ENCODE measurements at regions of chr2 and their contacts with region 1.

Region 1: DNA sequence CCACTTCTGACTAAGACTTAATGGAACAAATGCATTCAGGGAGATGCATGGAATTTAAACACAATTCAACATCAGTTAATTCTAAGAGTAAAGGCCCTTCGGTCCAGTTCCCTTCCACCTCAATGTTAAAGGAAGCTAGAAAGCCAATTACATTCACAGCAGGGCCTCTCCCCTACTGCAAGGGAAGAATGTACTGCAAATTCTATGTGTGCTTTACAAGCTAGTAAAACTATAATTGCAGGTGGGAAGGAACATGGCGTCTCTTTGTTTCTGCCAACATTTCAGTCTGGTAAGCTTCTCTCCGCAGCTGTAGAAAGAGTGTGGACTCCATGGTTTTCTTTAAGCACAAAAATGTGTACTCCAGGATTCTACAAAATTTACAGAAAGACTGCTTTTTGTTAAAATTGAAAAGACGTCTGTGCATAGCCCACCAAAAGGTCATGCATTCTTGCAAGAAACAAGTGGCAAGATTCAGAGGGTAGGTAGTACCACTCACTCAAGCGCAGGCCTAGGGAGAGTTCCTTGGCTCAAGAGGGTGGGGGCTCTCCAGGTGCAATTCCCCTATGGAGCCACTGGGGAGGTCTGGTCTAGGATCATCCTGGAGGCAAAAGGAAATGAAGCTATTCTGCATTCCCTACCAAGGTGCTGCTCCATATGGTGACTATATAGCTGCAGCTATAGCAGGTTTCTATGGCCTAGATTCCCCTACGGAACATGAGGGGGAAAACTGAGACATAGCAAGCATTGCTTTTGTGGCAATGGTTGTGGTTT is 127.0 kb upstream of the FZD5 start:
- DNase-seq: peak; percentile 46
- ATAC-seq: peak; percentile 81
- H3K4me3 ChIP-seq: no peak overlapping the region; a peak in 1 of 6 replicates
- H3K27ac ChIP-seq: peak overlapping the region; percentile 88
- H3K4me1 ChIP-seq: peaks cover 81% of the 10 kb centered on the region
- H3K27me3 ChIP-seq: no peaks in the 10 kb centered on the region
- CTCF ChIP-seq: peak; percentile 30; the same call in 1 of the 2 replicates
- EP300 ChIP-seq: no peak
- POLR2A ChIP-seq: no peak
- RAD21 ChIP-seq: no peak

Region 2: GRCh38 chr2:207546822-207547221 is 349.9 kb before region 1 on chr2:
- CTCF ChIA-PET with region 1: no interaction called
- POLR2A ChIA-PET with region 1: no interaction called
- in situ Hi-C with region 1: no loop called
- intact Hi-C with region 1: no loop called
- DNase-seq: no peak
- ATAC-seq: no peak
- H3K4me3 ChIP-seq: no peak overlapping the region
- H3K27ac ChIP-seq: no peak overlapping the region
- H3K4me1 ChIP-seq: no peaks in the 10 kb centered on the region
- H3K27me3 ChIP-seq: no peaks in the 10 kb centered on the region
- CTCF ChIP-seq: no peak
- EP300 ChIP-seq: no peak
- POLR2A ChIP-seq: no peak
- RAD21 ChIP-seq: no peak

Region 3: GRCh38 chr2:207777124-207777523 is 119.6 kb before region 1 on chr2:
- CTCF ChIA-PET with region 1: no interaction called
- POLR2A ChIA-PET with region 1: no interaction called
- in situ Hi-C with region 1: no loop called
- intact Hi-C with region 1: no loop called
- DNase-seq: no peak
- ATAC-seq: peak; percentile 19; the same call in 2 of the 3 replicates
- H3K4me3 ChIP-seq: no peak overlapping the region
- H3K27ac ChIP-seq: no peak overlapping the region
- H3K4me1 ChIP-seq: peaks cover 80% of the 10 kb centered on the region
- H3K27me3 ChIP-seq: no peaks in the 10 kb centered on the region
- CTCF ChIP-seq: no peak
- EP300 ChIP-seq: no peak
- POLR2A ChIP-seq: no peak
- RAD21 ChIP-seq: no peak

Region 4: GRCh38 chr2:207792244-207792785 is 104.4 kb before region 1 on chr2:
- CTCF ChIA-PET with region 1: no interaction called
- POLR2A ChIA-PET with region 1: interaction called, 12 read pairs
- in situ Hi-C with region 1: no loop called
- intact Hi-C with region 1: no loop called
- DNase-seq: peak; percentile 84
- ATAC-seq: peak; percentile 66
- H3K4me3 ChIP-seq: peak overlapping the region in 1 of 3 experiments; percentile 49; a peak in 2 of 6 replicates
- H3K27ac ChIP-seq: peak overlapping the region; percentile 82
- H3K4me1 ChIP-seq: peaks cover 73% of the 10 kb centered on the region
- H3K27me3 ChIP-seq: no peaks in the 10 kb centered on the region
- CTCF ChIP-seq: no peak
- EP300 ChIP-seq: peak in 1 of 2 experiments; percentile 16; a peak in 1 of 4 replicates
- POLR2A ChIP-seq: 0 out of 4 replicates have a peak, but pooled peaks have one; percentile 44 to 53
- RAD21 ChIP-seq: no peak

Region 5: GRCh38 chr2:207819839-207820784 is 76.6 kb before region 1 on chr2:
- CTCF ChIA-PET with region 1: no interaction called
- POLR2A ChIA-PET with region 1: interaction called, 18 read pairs
- in situ Hi-C with region 1: no loop called
- intact Hi-C with region 1: no loop called
- DNase-seq: peak; percentile 97
- ATAC-seq: peak; percentile 89
- H3K4me3 ChIP-seq: peak overlapping the region; percentile 41 to 55 (median 53)
- H3K27ac ChIP-seq: peak overlapping the region; percentile 94
- H3K4me1 ChIP-seq: peaks cover 100% of the 10 kb centered on the region
- H3K27me3 ChIP-seq: no peaks in the 10 kb centered on the region
- CTCF ChIP-seq: no peak; the same call in 1 of the 2 replicates
- EP300 ChIP-seq: peak in 1 of 2 experiments; percentile 83; a peak in 3 of 4 replicates
- POLR2A ChIP-seq: peak; percentile 68 to 81
- RAD21 ChIP-seq: peak; percentile 40; the same call in 1 of the 2 replicates

Region 6: GRCh38 chr2:207869784-207870778 is 26.6 kb before region 1 on chr2:
- CTCF ChIA-PET with region 1: no interaction called
- POLR2A ChIA-PET with region 1: interaction called, 57 read pairs
- in situ Hi-C with region 1: no loop called
- intact Hi-C with region 1: loop called (anchors 1 kb)
- DNase-seq: peak; percentile 100
- ATAC-seq: peak; percentile 95
- H3K4me3 ChIP-seq: peak overlapping the region; percentile 3 to 10 (median 3); a peak in 4 of 6 replicates
- H3K27ac ChIP-seq: peak overlapping the region; percentile 81
- H3K4me1 ChIP-seq: peaks cover 57% of the 10 kb centered on the region
- H3K27me3 ChIP-seq: no peaks in the 10 kb centered on the region
- CTCF ChIP-seq: no peak
- EP300 ChIP-seq: peak; percentile 97 to 99
- POLR2A ChIP-seq: peak in 1 of 2 experiments; percentile 57; a peak in 2 of 4 replicates
- RAD21 ChIP-seq: peak; percentile 36; the same call in 1 of the 2 replicates

Region 7: GRCh38 chr2:207926133-207926988 is 29.7 kb after region 1 on chr2:
- CTCF ChIA-PET with region 1: no interaction called
- POLR2A ChIA-PET with region 1: interaction called, 37 read pairs
- in situ Hi-C with region 1: no loop called
- intact Hi-C with region 1: no loop called
- DNase-seq: peak; percentile 96
- ATAC-seq: peak; percentile 97
- H3K4me3 ChIP-seq: peak overlapping the region in 2 of 3 experiments; percentile 5 to 18; a peak in 2 of 6 replicates
- H3K27ac ChIP-seq: peak overlapping the region; percentile 66
- H3K4me1 ChIP-seq: peaks cover 51% of the 10 kb centered on the region
- H3K27me3 ChIP-seq: no peaks in the 10 kb centered on the region
- CTCF ChIP-seq: no peak
- EP300 ChIP-seq: peak; percentile 53 to 79; a peak in 3 of 4 replicates
- POLR2A ChIP-seq: peak in 1 of 2 experiments; percentile 17; a peak in 1 of 4 replicates
- RAD21 ChIP-seq: no peak; the same call in 1 of the 2 replicates

Region 8: DNA sequence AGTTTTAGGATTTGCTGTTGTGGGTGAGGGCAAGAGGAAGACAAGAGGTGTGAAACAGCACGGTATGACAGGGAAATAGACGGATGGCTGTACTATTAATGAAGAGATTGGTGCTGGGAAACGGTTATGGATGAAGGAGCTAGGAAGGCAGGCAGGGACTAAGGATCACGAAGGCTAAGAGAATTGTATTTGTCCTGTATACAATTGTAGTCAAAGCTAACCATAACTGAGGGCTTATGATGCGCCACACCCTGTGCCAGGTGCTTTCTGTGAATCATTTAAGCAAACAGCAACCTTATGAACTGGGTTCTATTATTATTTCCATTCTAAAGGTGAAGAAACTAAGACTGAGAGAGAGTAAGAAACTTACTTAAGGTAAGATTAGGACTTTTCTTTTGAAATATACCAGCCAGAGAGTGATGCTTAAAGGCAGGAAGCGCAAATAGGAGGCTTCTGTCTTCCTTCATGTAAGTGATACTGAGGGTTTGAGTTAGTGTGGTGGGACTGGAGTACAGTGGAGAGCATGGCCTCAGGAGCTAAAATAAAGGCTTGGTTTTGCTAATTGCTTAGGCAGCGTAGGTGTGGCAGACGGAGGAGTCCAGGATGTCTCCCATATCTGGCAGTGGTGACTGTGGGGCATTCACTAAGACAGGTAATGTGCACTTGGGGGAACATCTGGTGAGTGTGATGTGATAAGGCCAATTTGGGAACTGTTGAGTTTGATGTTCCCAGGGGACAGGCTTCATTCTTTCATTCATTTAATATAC is 42.8 kb after region 1 on chr2:
- CTCF ChIA-PET with region 1: no interaction called
- POLR2A ChIA-PET with region 1: interaction called, 37 read pairs
- in situ Hi-C with region 1: no loop called
- intact Hi-C with region 1: loop called (anchors 5 kb)
- DNase-seq: no peak
- ATAC-seq: no peak
- H3K4me3 ChIP-seq: no peak overlapping the region
- H3K27ac ChIP-seq: no peak overlapping the region
- H3K4me1 ChIP-seq: peaks cover 54% of the 10 kb centered on the region
- H3K27me3 ChIP-seq: no peaks in the 10 kb centered on the region
- CTCF ChIP-seq: no peak
- EP300 ChIP-seq: no peak
- POLR2A ChIP-seq: no peak
- RAD21 ChIP-seq: no peak

Region 9: DNA sequence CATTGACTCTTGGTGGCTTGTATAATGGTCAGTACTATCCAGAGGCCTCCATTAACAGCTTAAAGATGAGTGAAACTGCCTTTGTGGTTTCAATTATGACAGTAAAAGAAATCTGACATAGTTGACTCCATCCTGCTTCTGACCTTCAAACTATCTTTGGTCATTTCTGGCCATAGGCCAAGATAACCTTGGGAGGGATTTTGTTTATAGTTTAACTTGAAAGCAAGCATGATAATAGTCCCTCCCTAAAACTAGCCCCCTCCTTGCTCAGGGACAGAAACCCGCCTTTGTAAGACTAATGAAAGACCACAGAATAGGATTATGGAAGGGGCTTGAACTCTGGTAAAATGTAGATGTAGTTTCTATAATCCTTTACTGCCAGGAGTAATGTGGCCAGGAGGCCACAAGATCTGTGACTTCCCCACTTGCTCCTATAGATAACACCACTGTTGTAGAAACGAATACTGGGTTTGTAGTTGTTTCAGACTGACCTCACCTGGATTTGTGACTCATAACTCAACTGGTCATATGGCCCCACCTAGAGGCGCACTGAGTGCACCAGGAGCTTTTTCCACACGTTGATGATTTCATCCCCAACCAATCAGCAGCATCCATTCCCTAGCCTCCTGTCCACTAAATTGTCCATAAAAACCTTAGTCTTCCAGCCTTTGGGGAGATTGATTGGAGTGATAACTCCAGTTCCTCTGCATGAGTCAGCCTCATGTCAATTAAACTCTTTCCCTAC is 137.2 kb after region 1 on chr2:
- CTCF ChIA-PET with region 1: no interaction called
- POLR2A ChIA-PET with region 1: interaction called, 10 read pairs
- in situ Hi-C with region 1: no loop called
- intact Hi-C with region 1: no loop called
- DNase-seq: peak; percentile 97
- ATAC-seq: peak; percentile 90
- H3K4me3 ChIP-seq: peak overlapping the region; percentile 4 to 16 (median 14); a peak in 2 of 6 replicates
- H3K27ac ChIP-seq: peak overlapping the region; percentile 70
- H3K4me1 ChIP-seq: peaks cover 70% of the 10 kb centered on the region
- H3K27me3 ChIP-seq: no peaks in the 10 kb centered on the region
- CTCF ChIP-seq: peak; percentile 98
- EP300 ChIP-seq: peak; percentile 53 to 55; a peak in 3 of 4 replicates
- POLR2A ChIP-seq: no peak
- RAD21 ChIP-seq: peak; percentile 91

Region 10: DNA sequence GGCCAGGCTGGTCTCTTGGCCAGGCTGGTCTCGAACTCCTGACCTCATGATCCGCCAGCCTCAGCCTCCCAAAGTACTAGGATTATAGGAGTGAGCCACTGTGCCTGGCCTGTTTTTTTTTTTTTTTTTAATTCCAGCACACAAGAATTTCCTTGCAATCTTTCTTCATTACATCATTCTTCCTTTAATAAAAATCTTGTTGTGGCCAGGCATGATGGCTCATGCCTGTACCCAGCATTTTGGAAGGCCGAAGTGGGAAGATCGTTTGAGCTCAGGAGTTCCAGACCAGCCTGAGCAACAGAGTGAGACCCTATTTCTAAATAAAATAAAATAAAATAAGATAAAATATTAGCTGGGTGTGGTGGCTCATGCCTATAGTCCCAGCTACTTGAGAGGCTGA is 150.0 kb after region 1 on chr2:
- CTCF ChIA-PET with region 1: no interaction called
- POLR2A ChIA-PET with region 1: no interaction called
- in situ Hi-C with region 1: no loop called
- intact Hi-C with region 1: no loop called
- DNase-seq: no peak
- ATAC-seq: no peak
- H3K4me3 ChIP-seq: no peak overlapping the region
- H3K27ac ChIP-seq: no peak overlapping the region
- H3K4me1 ChIP-seq: peaks cover 25% of the 10 kb centered on the region
- H3K27me3 ChIP-seq: peaks cover 0 to 13% of the 10 kb centered on the region in 2 experiments; a peak in 2 of 5 replicates
- CTCF ChIP-seq: no peak
- EP300 ChIP-seq: no peak
- POLR2A ChIP-seq: no peak
- RAD21 ChIP-seq: no peak